ENCODE measurements at regions of chr19 and their contacts with region 1.

Region 1: GRCh38 chr19:21082011-21082975 is at the start of gene ZNF714:
- DNase-seq: peak; percentile 76
- H3K4me3 ChIP-seq: peak within 1 kb of the TSS; percentile 87
- H3K27ac ChIP-seq: peak within 1 kb of the TSS; percentile 91
- H3K27me3 ChIP-seq: no peaks in the 10 kb centered on the region
- CTCF ChIP-seq: no peak
- polyA plus RNA-seq, gene ZNF714: 6.9 and 9.8 TPM in 2 replicates

Region 2: GRCh38 chr19:20776083-20777076 is 305.9 kb before region 1 on chr19 and contains the start of gene ZNF66:
- CTCF ChIA-PET with region 1: no interaction called
- POLR2A ChIA-PET with region 1: interaction called, 11 read pairs
- DNase-seq: peak; percentile 93
- H3K4me3 ChIP-seq: peak within 1 kb of the TSS; percentile 94
- H3K27ac ChIP-seq: peak within 1 kb of the TSS; percentile 57
- H3K27me3 ChIP-seq: no peaks in the 10 kb centered on the region
- CTCF ChIP-seq: no peak
- polyA plus RNA-seq, gene ZNF66: 0.69 and 0.84 TPM in 2 replicates

Region 3: DNA sequence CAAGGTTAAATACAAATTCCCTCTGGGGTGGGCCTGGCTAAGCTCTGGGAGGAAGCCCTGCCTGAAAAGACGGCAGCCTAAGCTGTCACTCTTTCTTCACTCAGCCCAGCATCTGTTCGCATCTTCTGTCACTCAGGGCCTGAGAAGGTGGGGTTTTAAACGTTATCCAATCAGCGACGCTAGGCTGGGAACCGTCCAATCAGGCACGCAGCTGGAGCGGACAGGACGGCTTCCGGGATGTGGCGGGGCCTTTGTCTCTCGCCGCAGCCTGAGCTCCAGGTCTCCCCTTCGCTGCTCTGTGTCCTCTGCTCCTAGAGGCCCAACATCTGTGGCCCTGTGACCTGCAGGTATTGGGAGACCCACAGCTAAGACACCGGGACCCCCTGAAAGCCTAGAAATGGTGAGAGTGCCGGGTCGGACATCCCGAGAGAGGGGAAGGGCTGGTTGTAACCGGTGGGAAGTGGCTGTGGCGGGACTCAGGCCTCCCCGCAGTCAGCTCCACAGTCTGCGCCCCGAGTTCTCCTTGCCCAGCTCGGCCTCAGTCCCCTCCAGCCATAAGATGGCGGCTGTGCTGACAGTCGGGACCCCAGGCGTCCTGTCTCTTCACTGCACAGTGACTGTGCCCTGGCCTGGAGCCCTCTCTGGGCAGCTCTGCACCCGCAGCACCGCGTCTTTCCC is 59.6 kb after region 1 on chr19 and contains the start of gene ZNF431:
- CTCF ChIA-PET with region 1: no interaction called
- POLR2A ChIA-PET with region 1: interaction called, 11 read pairs
- DNase-seq: peak; percentile 78
- H3K4me3 ChIP-seq: peak within 1 kb of the TSS; percentile 93
- H3K27ac ChIP-seq: peak within 1 kb of the TSS; percentile 81
- H3K27me3 ChIP-seq: no peaks in the 10 kb centered on the region
- CTCF ChIP-seq: no peak
- polyA plus RNA-seq, gene ZNF431: 4.5 and 5.8 TPM in 2 replicates